ENCODE measurements at regions of chr5 and their contacts with region 1.

Region 1: DNA sequence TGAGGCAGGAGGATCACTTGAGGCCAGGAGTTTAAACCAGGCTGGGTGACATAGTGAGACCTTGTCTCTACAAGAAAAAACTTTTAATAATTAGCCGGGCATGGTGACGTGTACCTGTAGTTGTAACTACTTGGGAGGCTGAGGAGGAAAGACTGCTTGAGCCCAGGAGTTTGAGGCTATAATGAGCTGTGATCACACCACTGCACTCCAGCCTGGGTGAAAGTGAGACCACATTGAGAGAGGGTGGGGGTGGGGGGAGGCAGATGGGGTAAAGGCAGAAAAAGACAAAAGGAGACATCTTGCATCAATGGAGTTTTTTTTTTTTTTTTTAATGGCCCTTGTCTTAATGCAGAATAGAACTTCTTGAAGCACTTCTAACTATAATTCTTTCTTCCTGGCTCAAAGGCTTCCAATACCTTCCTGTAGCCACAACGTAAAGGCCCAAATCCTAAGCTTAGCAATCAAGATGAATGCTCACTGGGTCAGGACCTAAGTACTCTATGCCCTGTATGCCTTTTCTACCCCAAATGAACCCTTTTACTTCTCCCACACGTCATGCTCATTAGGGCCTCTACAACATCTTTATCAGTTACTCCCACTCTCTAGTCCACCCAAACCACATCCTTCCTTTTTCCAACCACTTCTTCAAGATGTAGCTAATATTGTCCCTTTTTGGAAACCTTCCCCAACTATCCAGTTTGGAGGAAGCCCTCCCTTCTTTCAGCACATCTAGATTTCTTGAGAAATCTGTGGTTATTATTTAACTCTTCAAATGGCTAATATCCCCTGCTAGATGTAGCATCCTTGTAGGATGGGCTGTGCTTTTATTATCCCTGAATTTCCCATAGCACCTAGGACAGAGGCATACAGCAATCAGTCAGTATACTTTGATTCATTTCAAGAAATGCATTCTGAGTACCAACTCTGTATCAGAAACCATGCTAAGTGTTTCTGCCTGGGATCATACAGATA is 40.8 kb downstream of the CSF2 start:
- DNase-seq: no peak
- ATAC-seq: peak; percentile 53
- H3K4me3 Mint-ChIP-seq: no peak overlapping the region
- H3K27ac Mint-ChIP-seq: peak overlapping the region; percentile 58
- H3K4me1 Mint-ChIP-seq: peaks cover 65% of the 10 kb centered on the region
- H3K27me3 Mint-ChIP-seq: no peaks in the 10 kb centered on the region
- CTCF ChIP-seq: no peak

Region 2: DNA sequence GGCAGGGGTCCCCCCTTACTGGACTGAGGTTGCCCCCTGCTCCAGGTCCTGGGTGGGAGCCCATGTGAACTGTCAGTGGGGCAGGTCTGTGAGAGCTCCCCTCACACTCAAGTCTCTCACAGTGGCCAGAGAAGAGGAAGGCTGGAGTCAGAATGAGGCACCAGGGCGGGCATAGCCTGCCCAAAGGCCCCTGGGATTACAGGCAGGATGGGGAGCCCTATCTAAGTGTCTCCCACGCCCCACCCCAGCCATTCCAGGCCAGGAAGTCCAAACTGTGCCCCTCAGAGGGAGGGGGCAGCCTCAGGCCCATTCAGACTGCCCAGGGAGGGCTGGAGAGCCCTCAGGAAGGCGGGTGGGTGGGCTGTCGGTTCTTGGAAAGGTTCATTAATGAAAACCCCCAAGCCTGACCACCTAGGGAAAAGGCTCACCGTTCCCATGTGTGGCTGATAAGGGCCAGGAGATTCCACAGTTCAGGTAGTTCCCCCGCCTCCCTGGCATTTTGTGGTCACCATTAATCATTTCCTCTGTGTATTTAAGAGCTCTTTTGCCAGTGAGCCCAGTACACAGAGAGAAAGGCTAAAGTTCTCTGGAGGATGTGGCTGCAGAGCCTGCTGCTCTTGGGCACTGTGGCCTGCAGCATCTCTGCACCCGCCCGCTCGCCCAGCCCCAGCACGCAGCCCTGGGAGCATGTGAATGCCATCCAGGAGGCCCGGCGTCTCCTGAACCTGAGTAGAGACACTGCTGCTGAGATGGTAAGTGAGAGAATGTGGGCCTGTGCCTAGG is 41.0 kb before region 1 on chr5 and contains the start of gene CSF2:
- CTCF ChIA-PET with region 1: no interaction called
- POLR2A ChIA-PET with region 1: no interaction called
- intact Hi-C with region 1: loop called (anchors 5 kb)
- DNase-seq: peak; percentile 65
- ATAC-seq: peak; percentile 37
- H3K4me3 Mint-ChIP-seq: peak within 1 kb of the TSS; percentile 74
- H3K27ac Mint-ChIP-seq: peak within 1 kb of the TSS; percentile 80
- H3K4me1 Mint-ChIP-seq: peaks cover 68% of the 10 kb centered on the region
- H3K27me3 Mint-ChIP-seq: no peaks in the 10 kb centered on the region
- CTCF ChIP-seq: no peak
- total RNA-seq, gene CSF2: 61.5 to 64.1 TPM

Region 3: DNA sequence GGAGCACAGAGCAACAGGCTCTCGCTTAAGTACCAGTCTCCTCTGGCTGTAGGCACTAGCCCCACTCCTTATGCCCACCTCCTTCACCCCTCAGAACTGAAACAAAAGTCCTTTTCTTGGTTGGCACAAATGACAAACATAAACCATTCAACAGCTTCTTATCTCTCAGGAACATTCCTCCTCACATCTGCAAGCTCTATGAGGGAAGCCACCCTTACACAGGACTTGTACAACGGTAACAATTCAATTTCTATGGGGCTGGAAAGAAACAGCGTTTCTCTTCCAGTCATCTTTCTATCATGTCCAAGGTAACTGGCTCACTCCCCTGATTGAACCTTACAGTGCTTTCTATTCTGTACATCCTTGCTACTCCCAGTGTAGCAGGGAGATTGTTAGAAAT is 33.2 kb after region 1 on chr5:
- CTCF ChIA-PET with region 1: no interaction called
- POLR2A ChIA-PET with region 1: no interaction called
- intact Hi-C with region 1: no loop called
- DNase-seq: no peak
- ATAC-seq: no peak
- H3K4me3 Mint-ChIP-seq: no peak overlapping the region
- H3K27ac Mint-ChIP-seq: no peak overlapping the region
- H3K4me1 Mint-ChIP-seq: peaks cover 5% of the 10 kb centered on the region
- H3K27me3 Mint-ChIP-seq: peaks cover 6% of the 10 kb centered on the region
- CTCF ChIP-seq: no peak

Measured in activated CD8-positive, alpha-beta T cell treated with anti-CD3 and anti-CD28 coated beads for 36 hours (primary cell).